ENCODE measurements at regions of chr18 and their contacts with region 1.

Region 1: GRCh38 chr18:12668041-12668440 is 10.1 kb upstream of the SPIRE1 start:
- DNase-seq: no peak
- H3K4me3 ChIP-seq: no peak overlapping the region
- H3K27ac ChIP-seq: no peak overlapping the region
- H3K4me1 ChIP-seq: no peaks in the 10 kb centered on the region
- H3K27me3 ChIP-seq: no peaks in the 10 kb centered on the region
- CTCF ChIP-seq: no peak
- EP300 ChIP-seq: no peak
- RAD21 ChIP-seq: no peak

Region 2: DNA sequence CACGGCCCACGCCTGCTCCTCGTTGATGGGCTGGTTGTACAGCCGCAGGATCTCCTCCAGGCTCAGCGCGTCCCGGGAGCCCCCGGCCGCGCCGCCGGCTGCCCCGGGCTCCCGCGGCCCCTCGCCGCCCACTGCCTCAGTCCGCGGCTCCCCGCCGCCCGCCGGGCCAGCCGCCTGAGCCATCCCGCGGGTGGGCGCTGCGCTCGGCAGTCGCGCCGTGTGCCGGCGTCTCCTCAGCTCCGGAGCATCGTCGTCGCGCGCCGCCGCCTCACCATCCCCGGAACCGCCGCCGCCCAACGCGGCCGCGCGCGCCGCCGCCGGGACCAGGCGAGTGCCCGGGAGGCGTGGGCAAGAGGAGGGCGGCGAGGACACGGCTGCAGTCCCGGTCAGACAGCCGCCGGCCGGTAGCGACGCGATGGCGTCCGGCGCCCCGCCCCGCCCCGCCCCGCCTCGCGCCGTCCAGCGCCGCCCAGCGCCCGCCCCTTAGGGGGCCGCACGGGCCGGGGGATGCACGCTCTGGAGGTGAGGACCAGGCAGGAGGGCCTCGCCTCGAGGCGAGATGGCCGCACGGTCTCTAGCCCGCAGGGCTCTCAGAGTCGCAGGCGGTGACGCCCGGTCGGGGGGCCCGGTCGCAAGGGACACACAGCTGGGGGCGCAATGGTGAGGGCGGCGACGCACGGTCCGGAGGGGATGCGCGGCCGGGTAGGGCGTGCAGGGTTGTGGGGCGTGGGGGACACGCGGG is 10.2 kb before region 1 on chr18 and contains the start of gene SPIRE1:
- CTCF ChIA-PET with region 1: interaction called, 10 read pairs
- POLR2A ChIA-PET with region 1: interaction called, 3 read pairs
- DNase-seq: peak; percentile 93
- H3K4me3 ChIP-seq: peak within 1 kb of the TSS; percentile 76 to 83
- H3K27ac ChIP-seq: peak within 1 kb of the TSS; percentile 77 to 82
- H3K4me1 ChIP-seq: peaks cover 12 to 21% of the 10 kb centered on the region in 2 experiments
- H3K27me3 ChIP-seq: no peaks in the 10 kb centered on the region
- CTCF ChIP-seq: no peak
- EP300 ChIP-seq: no peak
- RAD21 ChIP-seq: no peak
- polyA plus RNA-seq, gene SPIRE1: 6.7 and 8.4 TPM in 2 replicates